CD8-positive, alpha-beta T cell (primary cell): ENCODE measurements at regions of chrX and their contacts with region 1.

Region 1: DNA sequence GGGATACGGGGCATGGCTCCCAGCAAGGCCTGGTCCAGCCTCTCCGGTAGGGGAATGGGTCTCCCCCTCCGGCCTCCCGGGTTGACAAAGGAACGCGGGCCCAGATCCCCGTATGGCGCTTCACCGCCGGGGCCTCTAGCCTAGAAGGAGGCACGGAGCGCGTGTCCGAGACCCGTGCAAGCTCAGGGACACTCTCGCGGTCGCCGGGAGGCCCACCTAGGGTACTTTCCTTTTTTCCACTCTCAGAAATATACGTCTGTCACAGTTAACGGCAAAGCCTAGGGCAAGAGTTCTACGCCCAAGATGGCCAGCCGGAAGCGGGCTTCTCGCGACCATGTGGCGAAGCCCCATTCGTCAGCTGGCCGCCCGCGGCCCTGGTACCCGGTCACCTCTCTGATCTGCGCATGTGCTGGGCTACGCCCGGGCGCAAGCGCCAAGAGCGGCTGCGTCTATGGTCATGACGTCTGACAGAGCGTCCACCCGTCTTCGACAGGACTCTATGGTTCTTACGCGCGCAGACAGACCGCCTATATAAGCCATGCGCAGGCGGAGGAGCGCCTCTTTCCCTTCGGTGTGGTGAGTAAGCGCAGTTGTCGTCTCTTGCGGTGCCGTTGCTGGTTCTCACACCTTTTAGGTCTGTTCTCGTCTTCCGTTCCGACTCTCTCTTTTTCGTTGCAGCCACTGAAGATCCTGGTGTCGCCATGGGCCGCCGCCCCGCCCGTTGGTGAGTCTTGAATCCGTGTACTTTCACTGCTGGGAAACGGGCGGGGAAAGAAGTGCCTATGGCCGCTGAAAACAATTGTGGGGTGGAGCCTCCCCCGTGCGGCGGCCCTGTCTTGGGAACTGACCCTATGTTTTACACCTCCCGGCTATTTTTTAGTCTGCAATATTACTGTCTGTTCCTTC is at the start of gene RPL10:
- DNase-seq: peak; percentile 78 to 96 (median 87)
- ATAC-seq: peak; percentile 82
- H3K4me3 ChIP-seq: peak within 1 kb of the TSS; percentile 86 to 95
- H3K4me3 Mint-ChIP-seq: peak within 1 kb of the TSS; percentile 96
- H3K27ac ChIP-seq: peak within 1 kb of the TSS; percentile 99
- H3K27ac Mint-ChIP-seq: peak within 1 kb of the TSS; percentile 99
- H3K4me1 ChIP-seq: peaks cover 15% of the 10 kb centered on the region
- H3K4me1 Mint-ChIP-seq: peaks cover 25% of the 10 kb centered on the region
- H3K27me3 ChIP-seq: no peaks in the 10 kb centered on the region
- H3K27me3 Mint-ChIP-seq: no peaks in the 10 kb centered on the region
- CTCF ChIP-seq: no peak
- total RNA-seq, gene RPL10: 6,105 to 6,263 TPM

Region 2: GRCh38 chrX:154378782-154379591 is 19.1 kb before region 1 on chrX and contains the start of gene EMD:
- CTCF ChIA-PET with region 1: interaction called, 3 read pairs
- POLR2A ChIA-PET with region 1: interaction called, 23 read pairs
- intact Hi-C with region 1: no loop called
- DNase-seq: peak; percentile 88 to 98 (median 94)
- ATAC-seq: peak; percentile 79
- H3K4me3 ChIP-seq: peak within 1 kb of the TSS; percentile 73 to 75
- H3K4me3 Mint-ChIP-seq: peak within 1 kb of the TSS; percentile 85
- H3K27ac ChIP-seq: peak within 1 kb of the TSS; percentile 98 to 99
- H3K27ac Mint-ChIP-seq: peak within 1 kb of the TSS; percentile 93
- H3K4me1 ChIP-seq: peaks cover 28% of the 10 kb centered on the region
- H3K4me1 Mint-ChIP-seq: peaks cover 18% of the 10 kb centered on the region
- H3K27me3 ChIP-seq: no peaks in the 10 kb centered on the region
- H3K27me3 Mint-ChIP-seq: no peaks in the 10 kb centered on the region
- CTCF ChIP-seq: no peak
- total RNA-seq, gene EMD: 176 TPM

Region 3: DNA sequence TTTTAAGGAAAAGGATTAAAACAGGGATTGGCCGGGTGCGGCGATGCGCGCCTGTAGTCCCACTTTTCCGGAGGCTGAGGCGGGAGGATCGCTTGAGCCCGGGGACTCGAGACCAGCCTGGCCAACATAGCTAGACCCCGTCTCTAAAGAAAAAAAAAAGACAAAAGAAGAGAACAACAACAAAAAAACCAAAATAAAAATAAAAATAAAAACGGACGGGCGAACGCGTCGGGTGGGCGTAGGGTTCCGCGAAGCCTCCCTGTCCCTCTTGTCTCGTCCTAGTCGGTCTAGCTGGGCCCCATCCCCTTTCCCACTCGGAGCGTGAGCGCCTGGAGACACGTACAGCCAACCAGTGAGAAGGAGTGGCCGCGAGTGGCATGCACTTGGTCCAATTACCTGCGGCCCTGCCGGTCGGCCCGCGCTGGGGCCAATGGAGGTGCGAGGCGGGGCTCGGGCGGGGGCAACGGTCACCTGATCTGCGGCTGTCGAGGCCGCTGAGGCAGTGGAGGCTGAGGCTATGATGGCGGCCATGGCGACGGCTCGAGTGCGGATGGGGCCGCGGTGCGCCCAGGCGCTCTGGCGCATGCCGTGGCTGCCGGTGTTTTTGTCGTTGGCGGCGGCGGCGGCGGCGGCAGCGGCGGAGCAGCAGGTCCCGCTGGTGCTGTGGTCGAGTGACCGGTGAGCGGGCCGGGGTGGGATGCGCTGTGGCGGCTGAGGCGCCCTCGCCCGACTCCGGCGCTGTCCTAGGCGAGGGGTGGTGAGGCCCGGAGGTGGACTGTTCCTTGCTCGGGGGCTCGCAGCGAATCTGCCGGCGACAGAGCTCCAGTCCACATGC is 30.3 kb after region 1 on chrX and contains the start of gene ATP6AP1:
- CTCF ChIA-PET with region 1: interaction called, 3 read pairs
- POLR2A ChIA-PET with region 1: interaction called, 17 read pairs
- intact Hi-C with region 1: no loop called
- DNase-seq: peak; percentile 71 to 94 (median 86)
- ATAC-seq: peak; percentile 97
- H3K4me3 ChIP-seq: peak within 1 kb of the TSS; percentile 63 to 67
- H3K4me3 Mint-ChIP-seq: peak within 1 kb of the TSS; percentile 82
- H3K27ac ChIP-seq: peak within 1 kb of the TSS; percentile 45 to 63
- H3K27ac Mint-ChIP-seq: peak within 1 kb of the TSS; percentile 86
- H3K4me1 ChIP-seq: peaks cover 12% of the 10 kb centered on the region
- H3K4me1 Mint-ChIP-seq: peaks cover 27% of the 10 kb centered on the region
- H3K27me3 ChIP-seq: no peaks in the 10 kb centered on the region
- H3K27me3 Mint-ChIP-seq: no peaks in the 10 kb centered on the region
- CTCF ChIP-seq: no peak
- total RNA-seq, gene ATP6AP1: 31.2 to 32.4 TPM

Region 4: DNA sequence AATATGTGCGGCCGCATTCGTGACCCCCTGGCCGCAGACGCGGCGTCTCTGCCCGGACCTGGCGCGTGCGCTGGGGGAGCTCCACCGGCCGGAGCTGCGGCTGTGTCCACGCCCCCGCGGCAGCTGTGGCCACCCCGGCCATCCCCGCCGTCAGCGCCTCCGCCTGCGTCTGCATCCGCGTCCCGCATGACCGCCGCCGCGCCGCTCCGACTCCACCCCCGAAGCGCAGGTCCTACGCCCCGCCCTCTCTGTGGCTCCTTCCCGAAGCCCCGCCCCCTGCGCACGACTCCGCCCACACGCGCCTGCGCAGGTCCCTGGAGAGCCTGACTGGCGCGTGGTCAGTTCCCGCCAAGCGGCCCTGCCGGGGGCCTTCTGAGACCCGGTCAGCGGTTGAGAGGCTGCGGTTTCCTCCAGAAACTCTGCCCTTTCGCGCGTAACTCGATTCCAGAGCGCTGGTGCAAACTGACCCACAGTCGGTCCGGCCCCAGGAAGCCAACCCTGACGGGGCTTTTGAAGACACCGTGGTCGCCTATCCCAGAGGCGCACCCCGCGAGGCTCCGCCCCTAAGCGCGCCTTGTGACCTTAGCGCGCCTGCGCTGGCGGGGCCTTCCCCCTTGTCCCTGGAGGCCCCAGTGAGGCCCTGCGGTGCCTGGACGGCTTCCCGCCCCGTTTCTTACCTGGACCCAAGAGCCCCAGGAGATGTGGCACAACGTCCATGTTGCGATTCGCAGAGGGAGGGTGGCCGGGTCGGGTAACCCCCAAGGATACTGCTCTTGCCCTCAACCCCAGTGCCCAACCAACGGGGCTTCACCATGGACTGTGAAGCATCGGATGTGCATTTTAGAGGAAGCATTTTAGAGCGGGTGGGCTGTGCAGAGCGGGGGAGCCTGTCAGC is 80.9 kb after region 1 on chrX and contains the start of gene LAGE3:
- CTCF ChIA-PET with region 1: no interaction called
- POLR2A ChIA-PET with region 1: interaction called, 4 read pairs
- intact Hi-C with region 1: loop called (anchors 10 kb)
- DNase-seq: peak; percentile 86 to 98 (median 93)
- ATAC-seq: peak; percentile 93
- H3K4me3 ChIP-seq: peak within 1 kb of the TSS; percentile 54 to 72
- H3K4me3 Mint-ChIP-seq: peak within 1 kb of the TSS; percentile 82
- H3K27ac ChIP-seq: peak within 1 kb of the TSS; percentile 66 to 82
- H3K27ac Mint-ChIP-seq: peak within 1 kb of the TSS; percentile 84
- H3K4me1 ChIP-seq: peaks cover 28% of the 10 kb centered on the region
- H3K4me1 Mint-ChIP-seq: peaks cover 25% of the 10 kb centered on the region
- H3K27me3 ChIP-seq: no peaks in the 10 kb centered on the region
- H3K27me3 Mint-ChIP-seq: no peaks in the 10 kb centered on the region
- CTCF ChIP-seq: no peak
- total RNA-seq, gene LAGE3: 6.3 to 6.6 TPM

Region 5: GRCh38 chrX:154515878-154516655 is 118.0 kb after region 1 on chrX and contains the start of gene FAM3A:
- CTCF ChIA-PET with region 1: no interaction called
- POLR2A ChIA-PET with region 1: interaction called, 23 read pairs
- intact Hi-C with region 1: no loop called
- DNase-seq: peak; percentile 83 to 96 (median 91)
- ATAC-seq: peak; percentile 94
- H3K4me3 ChIP-seq: peak within 1 kb of the TSS; percentile 64 to 68
- H3K4me3 Mint-ChIP-seq: peak within 1 kb of the TSS; percentile 81
- H3K27ac ChIP-seq: peak within 1 kb of the TSS; percentile 70 to 76
- H3K27ac Mint-ChIP-seq: peak within 1 kb of the TSS; percentile 92
- H3K4me1 ChIP-seq: peaks cover 39% of the 10 kb centered on the region
- H3K4me1 Mint-ChIP-seq: peaks cover 27% of the 10 kb centered on the region
- H3K27me3 ChIP-seq: no peaks in the 10 kb centered on the region
- H3K27me3 Mint-ChIP-seq: no peaks in the 10 kb centered on the region
- CTCF ChIP-seq: no peak
- total RNA-seq, gene FAM3A: 37.7 to 41.7 TPM

Region 6: DNA sequence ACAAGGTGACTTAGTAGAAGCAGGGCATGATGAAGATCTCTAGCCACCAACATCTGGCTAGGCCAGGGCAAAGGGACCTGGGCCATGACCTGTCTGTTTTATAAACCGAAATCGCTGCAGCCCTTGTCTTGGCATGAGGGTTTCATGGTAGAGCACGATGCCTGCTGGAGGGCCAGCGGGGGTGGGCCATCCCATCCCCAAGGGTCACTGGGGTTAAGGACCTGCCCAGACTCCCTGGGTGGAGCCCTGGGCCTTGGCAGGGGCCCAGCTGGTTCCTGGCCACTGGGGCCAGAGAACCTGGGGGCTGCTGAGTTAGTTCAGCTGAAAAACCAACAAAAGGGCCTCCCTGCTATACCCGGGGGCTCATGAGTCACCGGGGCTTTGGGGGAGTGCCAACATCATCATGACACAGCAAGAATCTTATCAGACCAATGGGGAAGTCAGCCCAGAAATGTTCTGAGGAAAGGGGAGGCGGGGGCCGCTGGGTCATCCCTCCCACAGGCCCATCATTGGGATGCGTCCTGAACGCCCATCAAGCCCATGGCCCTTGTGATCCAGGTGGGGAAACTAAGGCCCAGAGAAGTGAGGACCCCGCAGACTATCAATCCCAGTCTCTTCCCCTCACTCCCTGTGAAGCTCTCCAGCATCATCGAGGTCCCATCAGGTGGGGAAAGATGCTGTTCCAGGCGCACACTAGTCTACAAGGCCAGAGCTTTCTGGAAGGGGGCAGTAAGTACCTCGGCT is 143.8 kb after region 1 on chrX:
- CTCF ChIA-PET with region 1: interaction called, 3 read pairs
- POLR2A ChIA-PET with region 1: interaction called, 11 read pairs
- intact Hi-C with region 1: no loop called
- DNase-seq: peak in 6 of 9 experiments; percentile 34 to 66 (median 58)
- ATAC-seq: peak; percentile 18
- H3K4me3 ChIP-seq: peak overlapping the region in 1 of 2 experiments; percentile 18
- H3K4me3 Mint-ChIP-seq: peak overlapping the region; percentile 15
- H3K27ac ChIP-seq: peak overlapping the region; percentile 50 to 84
- H3K27ac Mint-ChIP-seq: peak overlapping the region; percentile 87
- H3K4me1 ChIP-seq: peaks cover 48% of the 10 kb centered on the region
- H3K4me1 Mint-ChIP-seq: peaks cover 38% of the 10 kb centered on the region
- H3K27me3 ChIP-seq: no peaks in the 10 kb centered on the region
- H3K27me3 Mint-ChIP-seq: no peaks in the 10 kb centered on the region
- CTCF ChIP-seq: no peak